Naive thymus-derived CD4-positive, alpha-beta T cell (primary cell): ENCODE measurements at regions of chr2 and their contacts with region 1.

Region 1: DNA sequence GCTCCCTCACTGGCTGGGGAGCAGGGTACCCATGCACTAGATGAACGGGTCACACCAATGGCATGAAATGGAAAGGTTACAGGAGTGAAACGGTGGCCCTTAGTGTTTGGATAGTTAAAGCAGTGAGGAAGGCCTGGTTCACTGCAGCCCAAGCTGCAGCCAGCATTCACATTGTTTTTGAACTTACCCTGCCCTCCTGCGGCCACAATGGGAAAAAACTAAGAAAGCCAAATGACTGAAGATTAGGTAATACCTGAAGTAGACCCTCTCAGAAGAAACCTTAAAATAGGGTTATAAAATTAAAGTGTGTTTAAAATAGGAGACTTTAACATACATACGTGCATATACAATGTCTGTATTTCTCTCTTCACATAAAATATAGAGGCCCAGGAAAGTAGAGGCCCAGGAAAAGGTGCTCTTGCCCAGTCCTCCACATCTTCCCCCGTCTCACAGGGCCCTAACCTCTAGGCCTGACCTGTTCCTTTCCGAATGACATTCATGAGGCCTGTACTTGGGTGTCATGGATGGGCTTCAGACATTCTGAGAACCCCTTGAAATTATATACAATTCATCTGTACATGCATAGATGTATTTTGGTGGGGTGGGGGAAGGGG is 33.3 kb downstream of the DOK1 start:
- DNase-seq: peak; percentile 27 to 74 (median 63)
- ATAC-seq: peak; percentile 85
- H3K4me3 ChIP-seq: no peak overlapping the region
- H3K4me3 Mint-ChIP-seq: no peak overlapping the region
- H3K27ac ChIP-seq: no peak overlapping the region
- H3K27ac Mint-ChIP-seq: peak overlapping the region in 1 of 9 donors; percentile 30
- H3K4me1 ChIP-seq: no peaks in the 10 kb centered on the region
- H3K4me1 Mint-ChIP-seq: peaks cover 8 to 35% (median 15%) of the 10 kb centered on the region in 7 donors
- H3K27me3 ChIP-seq: no peaks in the 10 kb centered on the region
- H3K27me3 Mint-ChIP-seq: peaks cover 8 to 26% (median 17%) of the 10 kb centered on the region in 5 donors

Region 2: DNA sequence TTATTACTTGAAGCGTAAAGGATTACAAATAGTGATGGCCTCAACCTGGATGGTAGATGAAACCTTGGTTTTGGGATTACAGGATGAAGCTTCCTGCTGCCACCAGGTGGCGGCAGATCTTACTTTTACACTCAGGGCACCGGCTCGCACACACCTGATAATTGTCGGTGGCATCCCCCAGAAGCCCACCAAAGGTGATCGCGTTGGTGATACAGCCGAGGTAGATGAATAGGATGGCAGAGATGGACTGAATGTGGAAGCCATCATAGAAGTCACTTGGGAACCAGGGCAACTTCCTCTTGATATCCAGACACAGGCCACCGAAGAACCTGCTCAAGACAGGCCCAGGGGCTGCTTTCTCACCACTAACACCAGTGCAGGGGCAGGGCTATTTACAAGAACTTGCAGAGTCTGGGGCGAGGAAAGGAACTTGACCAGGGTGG is 337.6 kb before region 1 on chr2:
- CTCF ChIA-PET with region 1: interaction called, 7 read pairs
- POLR2A ChIA-PET with region 1: no interaction called
- intact Hi-C with region 1: loop called (anchors 1 kb)
- DNase-seq: peak; percentile 33 to 65 (median 54)
- ATAC-seq: peak; percentile 70
- H3K4me3 ChIP-seq: no peak overlapping the region
- H3K4me3 Mint-ChIP-seq: peak overlapping the region in 1 of 10 donors; percentile 49
- H3K27ac ChIP-seq: no peak overlapping the region
- H3K27ac Mint-ChIP-seq: peak overlapping the region in 2 of 9 donors; percentile 62 to 84
- H3K4me1 ChIP-seq: no peaks in the 10 kb centered on the region
- H3K4me1 Mint-ChIP-seq: peaks cover 0 to 6% (median 0%) of the 10 kb centered on the region in 7 donors
- H3K27me3 ChIP-seq: no peaks in the 10 kb centered on the region
- H3K27me3 Mint-ChIP-seq: no peaks in the 10 kb centered on the region

Region 3: GRCh38 chr2:74391580-74392448 is 196.0 kb before region 1 on chr2:
- CTCF ChIA-PET with region 1: no interaction called
- POLR2A ChIA-PET with region 1: no interaction called
- intact Hi-C with region 1: loop called (anchors 2 to 5 kb)
- DNase-seq: peak; percentile 89 to 99 (median 93)
- ATAC-seq: peak; percentile 97
- H3K4me3 ChIP-seq: peak overlapping the region; percentile 78
- H3K4me3 Mint-ChIP-seq: peak overlapping the region in 4 of 10 donors; percentile 40 to 100 (median 92)
- H3K27ac ChIP-seq: peak overlapping the region; percentile 91
- H3K27ac Mint-ChIP-seq: peak overlapping the region in 8 of 9 donors; percentile 98 to 100 (median 99)
- H3K4me1 ChIP-seq: peaks cover 8 to 25% of the 10 kb centered on the region in 2 donors
- H3K4me1 Mint-ChIP-seq: peaks cover 0 to 15% (median 5%) of the 10 kb centered on the region in 7 donors
- H3K27me3 ChIP-seq: no peaks in the 10 kb centered on the region
- H3K27me3 Mint-ChIP-seq: peaks cover 0 to 14% (median 5%) of the 10 kb centered on the region in 5 donors

Region 4: DNA sequence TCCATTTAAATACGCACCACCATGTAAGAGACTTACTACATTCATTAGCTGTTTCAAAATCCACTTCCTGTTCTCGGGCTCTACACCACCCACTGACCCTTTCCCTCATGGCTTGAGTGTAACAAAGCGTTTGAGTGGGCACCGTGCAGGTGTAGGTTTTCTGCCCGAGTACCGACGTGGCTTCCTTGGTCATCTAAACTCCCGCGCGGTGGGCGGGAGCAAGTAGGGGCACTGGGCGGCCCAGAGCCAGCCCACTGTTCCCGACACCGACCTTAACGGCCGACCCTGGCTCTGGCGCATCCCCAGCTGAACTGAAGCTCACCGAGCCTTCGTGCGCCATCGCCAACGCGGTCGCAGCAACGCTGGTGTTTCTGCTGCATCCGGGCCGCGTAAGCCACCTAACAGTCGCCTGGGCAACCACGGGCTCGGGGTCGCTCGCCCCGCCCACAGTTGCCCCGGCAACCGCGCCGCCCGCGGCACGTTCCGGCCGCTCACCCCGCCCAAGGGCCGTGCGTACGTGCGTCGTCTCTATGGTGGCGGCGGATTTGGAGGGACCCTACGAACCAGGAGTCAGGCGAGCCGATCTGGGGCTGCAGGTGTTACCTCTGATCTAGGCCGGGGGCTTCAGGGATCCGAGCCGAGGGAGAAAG is 166.4 kb before region 1 on chr2 and contains the starts of genes C2orf81 and WDR54:
- CTCF ChIA-PET with region 1: no interaction called
- POLR2A ChIA-PET with region 1: no interaction called
- intact Hi-C with region 1: loop called in 1 of 2 experiments (anchors 1 kb)
- DNase-seq: peak; percentile 86 to 96 (median 95)
- ATAC-seq: peak; percentile 97
- H3K4me3 ChIP-seq: peak within 1 kb of the TSS; percentile 96
- H3K4me3 Mint-ChIP-seq: peak within 1 kb of the TSS; percentile 90 to 100 (median 98)
- H3K27ac ChIP-seq: peak within 1 kb of the TSS; percentile 97
- H3K27ac Mint-ChIP-seq: peak within 1 kb of the TSS; percentile 96 to 100 (median 99)
- H3K4me1 ChIP-seq: peaks cover 4 to 19% of the 10 kb centered on the region in 2 donors
- H3K4me1 Mint-ChIP-seq: peaks cover 14 to 44% (median 36%) of the 10 kb centered on the region in 7 donors
- H3K27me3 ChIP-seq: no peaks in the 10 kb centered on the region
- H3K27me3 Mint-ChIP-seq: no peaks in the 10 kb centered on the region
- total RNA-seq, gene C2orf81: 4.3 to 10.5 (median 6.8) TPM
- total RNA-seq, gene WDR54: 26.5 to 78.5 (median 30.8) TPM

Region 5: GRCh38 chr2:74482801-74483674 is 104.7 kb before region 1 on chr2 and contains the starts of genes CCDC142 and TTC31:
- CTCF ChIA-PET with region 1: interaction called, 59 read pairs
- POLR2A ChIA-PET with region 1: interaction called, 26 read pairs
- intact Hi-C with region 1: loop called (anchors 1 kb)
- DNase-seq: peak; percentile 76 to 96 (median 96)
- ATAC-seq: peak; percentile 96
- H3K4me3 ChIP-seq: peak within 1 kb of the TSS; percentile 99
- H3K4me3 Mint-ChIP-seq: peak within 1 kb of the TSS; percentile 91 to 100 (median 98)
- H3K27ac ChIP-seq: peak within 1 kb of the TSS; percentile 85
- H3K27ac Mint-ChIP-seq: peak within 1 kb of the TSS; percentile 93 to 100 (median 99)
- H3K4me1 ChIP-seq: peaks cover 22 to 26% of the 10 kb centered on the region in 2 donors
- H3K4me1 Mint-ChIP-seq: peaks cover 21 to 59% (median 41%) of the 10 kb centered on the region in 7 donors
- H3K27me3 ChIP-seq: no peaks in the 10 kb centered on the region
- H3K27me3 Mint-ChIP-seq: no peaks in the 10 kb centered on the region
- total RNA-seq, gene CCDC142: 21.4 to 75.2 (median 33.8) TPM
- total RNA-seq, gene TTC31: 35.5 to 50.4 (median 43.6) TPM

Region 6: DNA sequence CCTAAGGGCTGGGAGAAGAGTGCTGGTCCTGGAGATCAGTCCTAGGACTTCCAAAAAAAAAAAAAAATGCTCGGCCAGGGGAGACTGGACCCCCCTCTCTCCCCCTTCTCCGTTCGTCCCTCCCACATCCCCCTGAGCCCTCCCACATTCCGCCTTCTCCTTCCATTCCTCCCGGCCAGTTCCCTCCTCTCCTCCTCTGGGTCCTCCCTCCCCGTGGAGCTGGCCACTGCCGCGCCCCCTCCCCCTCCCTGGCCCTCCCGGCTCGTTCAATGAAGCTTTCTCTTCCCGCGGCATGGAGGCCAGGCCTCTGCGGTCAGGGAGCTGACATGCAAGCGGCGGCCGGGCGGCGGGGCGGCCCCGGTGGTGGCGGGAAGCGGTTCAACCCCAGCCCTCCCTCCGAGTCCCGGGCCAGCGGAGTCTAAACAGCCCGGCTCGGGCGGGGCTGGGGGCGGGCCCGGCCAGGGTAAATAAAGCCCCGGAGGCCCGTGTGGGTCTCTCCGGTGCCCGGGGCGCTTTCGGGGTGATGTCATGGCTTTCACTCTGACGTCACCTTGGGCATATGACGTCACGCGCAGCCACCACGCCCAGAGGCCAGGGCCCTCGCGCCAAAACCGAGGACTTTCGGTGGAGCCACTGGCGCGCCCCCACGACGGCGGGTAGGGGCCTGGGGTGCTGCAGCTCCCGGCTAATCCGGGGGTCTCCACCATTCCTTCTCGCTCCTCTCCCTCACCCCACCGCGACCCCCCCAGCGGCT is 33.7 kb before region 1 on chr2 and contains the start of gene LOXL3:
- CTCF ChIA-PET with region 1: interaction called, 3 read pairs
- POLR2A ChIA-PET with region 1: interaction called, 4 read pairs
- intact Hi-C with region 1: loop called (anchors 1 kb)
- DNase-seq: peak in 8 of 9 donors; percentile 63 to 87 (median 76)
- ATAC-seq: peak; percentile 67
- H3K4me3 ChIP-seq: peak within 1 kb of the TSS; percentile 70
- H3K4me3 Mint-ChIP-seq: peak within 1 kb of the TSS; percentile 85 to 96 (median 92)
- H3K27ac ChIP-seq: peak within 1 kb of the TSS; percentile 76
- H3K27ac Mint-ChIP-seq: peak within 1 kb of the TSS; percentile 62 to 95 (median 86)
- H3K4me1 ChIP-seq: peaks cover 7 to 17% of the 10 kb centered on the region in 2 donors
- H3K4me1 Mint-ChIP-seq: peaks cover 9 to 31% (median 18%) of the 10 kb centered on the region in 7 donors
- H3K27me3 ChIP-seq: peaks cover 0 to 10% of the 10 kb centered on the region in 2 donors
- H3K27me3 Mint-ChIP-seq: peaks cover 21 to 27% (median 24%) of the 10 kb centered on the region in 5 donors
- total RNA-seq, gene LOXL3: 0.50 to 6.9 (median 0.81) TPM

Region 7: GRCh38 chr2:74573747-74574562 is 13.8 kb before region 1 on chr2:
- CTCF ChIA-PET with region 1: interaction called, 17 read pairs
- POLR2A ChIA-PET with region 1: interaction called, 4 read pairs
- intact Hi-C with region 1: loop called in 1 of 2 experiments (anchors 2 kb)
- DNase-seq: peak in 6 of 9 donors; percentile 21 to 49 (median 42)
- ATAC-seq: peak; percentile 75
- H3K4me3 ChIP-seq: peak overlapping the region; percentile 20
- H3K4me3 Mint-ChIP-seq: peak overlapping the region; percentile 46 to 82 (median 75)
- H3K27ac ChIP-seq: peak overlapping the region; percentile 46
- H3K27ac Mint-ChIP-seq: peak overlapping the region; percentile 62 to 92 (median 86)
- H3K4me1 ChIP-seq: peaks cover 0 to 13% of the 10 kb centered on the region in 2 donors
- H3K4me1 Mint-ChIP-seq: peaks cover 16 to 44% (median 17%) of the 10 kb centered on the region in 7 donors
- H3K27me3 ChIP-seq: no peaks in the 10 kb centered on the region
- H3K27me3 Mint-ChIP-seq: peaks cover 0 to 16% (median 0%) of the 10 kb centered on the region in 5 donors